ENCODE measurements at regions of chr5 and their contacts with region 1.

Region 1: GRCh38 chr5:39283231-39283818 is 64.0 kb upstream of the FYB1 start:
- DNase-seq: peak; percentile 71
- ATAC-seq: peak; percentile 100
- H3K4me3 Mint-ChIP-seq: no peak overlapping the region
- H3K27ac Mint-ChIP-seq: no peak overlapping the region
- H3K4me1 Mint-ChIP-seq: peaks cover 16% of the 10 kb centered on the region
- H3K27me3 Mint-ChIP-seq: no peaks in the 10 kb centered on the region

Region 2: DNA sequence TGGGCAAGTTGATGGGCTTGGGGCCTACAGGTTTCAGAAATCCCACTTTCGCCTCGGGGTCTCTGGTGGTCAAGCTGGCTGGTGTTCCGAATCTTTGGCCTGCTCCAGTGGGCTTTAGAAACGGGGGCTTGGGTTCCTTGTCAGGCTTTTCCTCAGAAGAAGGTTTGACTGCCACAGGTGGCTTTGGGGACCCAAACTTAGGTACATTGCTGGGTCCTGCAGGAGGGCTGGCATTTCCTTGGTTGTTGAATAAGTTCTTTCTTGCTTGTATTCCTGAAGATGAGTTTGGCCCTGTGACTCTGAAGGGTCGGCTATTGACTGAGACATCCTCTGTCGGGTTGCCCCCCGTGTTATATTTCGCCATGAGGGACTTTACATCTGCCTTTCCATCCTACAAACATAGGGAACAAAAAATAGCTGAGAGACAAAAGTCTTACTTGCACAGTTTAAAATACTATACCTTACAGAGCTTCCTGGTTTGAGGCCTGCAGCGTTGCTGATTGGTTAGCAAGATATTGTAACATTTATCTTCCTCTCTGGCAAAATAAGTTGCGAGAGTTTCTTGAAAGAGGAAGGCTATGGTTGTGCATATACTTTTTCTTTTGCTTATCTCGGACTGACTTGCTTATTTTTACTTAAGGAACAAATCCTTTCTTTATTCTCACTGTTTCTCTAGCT is 80.6 kb before region 1 on chr5:
- CTCF ChIA-PET with region 1: interaction called, 15 read pairs
- DNase-seq: peak; percentile 68
- ATAC-seq: peak; percentile 55
- H3K4me3 Mint-ChIP-seq: peak overlapping the region; percentile 97
- H3K27ac Mint-ChIP-seq: peak overlapping the region; percentile 95
- H3K4me1 Mint-ChIP-seq: peaks cover 43% of the 10 kb centered on the region
- H3K27me3 Mint-ChIP-seq: no peaks in the 10 kb centered on the region

Region 3: GRCh38 chr5:39209924-39210323 is 73.4 kb before region 1 on chr5:
- CTCF ChIA-PET with region 1: interaction called, 13 read pairs
- DNase-seq: peak; percentile 95
- ATAC-seq: peak; percentile 75
- H3K4me3 Mint-ChIP-seq: peak overlapping the region; percentile 66
- H3K27ac Mint-ChIP-seq: peak overlapping the region; percentile 95
- H3K4me1 Mint-ChIP-seq: peaks cover 91% of the 10 kb centered on the region
- H3K27me3 Mint-ChIP-seq: no peaks in the 10 kb centered on the region

Region 4: GRCh38 chr5:39231705-39232525 is 51.4 kb before region 1 on chr5:
- CTCF ChIA-PET with region 1: interaction called, 16 read pairs
- DNase-seq: peak; percentile 64
- ATAC-seq: peak; percentile 88
- H3K4me3 Mint-ChIP-seq: no peak overlapping the region
- H3K27ac Mint-ChIP-seq: peak overlapping the region; percentile 84
- H3K4me1 Mint-ChIP-seq: peaks cover 15% of the 10 kb centered on the region
- H3K27me3 Mint-ChIP-seq: no peaks in the 10 kb centered on the region

Region 5: GRCh38 chr5:39253196-39253595 is 30.1 kb before region 1 on chr5:
- CTCF ChIA-PET with region 1: no interaction called
- DNase-seq: no peak
- ATAC-seq: no peak
- H3K4me3 Mint-ChIP-seq: no peak overlapping the region
- H3K27ac Mint-ChIP-seq: no peak overlapping the region
- H3K4me1 Mint-ChIP-seq: peaks cover 14% of the 10 kb centered on the region
- H3K27me3 Mint-ChIP-seq: no peaks in the 10 kb centered on the region

Region 6: DNA sequence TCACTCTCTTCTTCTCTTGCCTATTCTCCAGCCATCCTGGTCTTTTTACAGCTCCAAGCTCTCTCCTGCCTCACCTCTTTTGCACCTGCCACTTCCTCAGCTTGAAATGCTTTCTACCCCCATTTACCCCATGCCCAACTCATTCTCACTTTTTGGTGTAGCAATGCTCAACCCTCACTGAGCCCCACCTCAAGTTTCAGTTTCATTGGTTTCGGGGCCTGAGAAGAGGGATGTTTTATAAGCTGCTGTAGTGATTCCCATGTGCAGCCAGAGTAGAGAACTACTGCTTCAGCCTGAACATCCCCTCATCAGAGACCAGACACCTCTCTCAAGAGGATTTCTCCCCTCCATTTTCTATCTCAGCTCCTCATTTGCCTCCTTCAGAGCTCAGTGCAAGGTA is 18.8 kb before region 1 on chr5:
- CTCF ChIA-PET with region 1: interaction called, 11 read pairs
- DNase-seq: peak; percentile 66
- ATAC-seq: peak; percentile 87
- H3K4me3 Mint-ChIP-seq: peak overlapping the region; percentile 11
- H3K27ac Mint-ChIP-seq: peak overlapping the region; percentile 77
- H3K4me1 Mint-ChIP-seq: peaks cover 36% of the 10 kb centered on the region
- H3K27me3 Mint-ChIP-seq: no peaks in the 10 kb centered on the region

Measured in activated CD8-positive, alpha-beta memory T cell treated with anti-CD3 and anti-CD28 coated beads, Interleukin-2, amount 10 ng/mL, durations not matched to agents 7 days and 5 days (primary cell).